ENCODE measurements at regions of chr2 and their contacts with region 1.

Region 1: DNA sequence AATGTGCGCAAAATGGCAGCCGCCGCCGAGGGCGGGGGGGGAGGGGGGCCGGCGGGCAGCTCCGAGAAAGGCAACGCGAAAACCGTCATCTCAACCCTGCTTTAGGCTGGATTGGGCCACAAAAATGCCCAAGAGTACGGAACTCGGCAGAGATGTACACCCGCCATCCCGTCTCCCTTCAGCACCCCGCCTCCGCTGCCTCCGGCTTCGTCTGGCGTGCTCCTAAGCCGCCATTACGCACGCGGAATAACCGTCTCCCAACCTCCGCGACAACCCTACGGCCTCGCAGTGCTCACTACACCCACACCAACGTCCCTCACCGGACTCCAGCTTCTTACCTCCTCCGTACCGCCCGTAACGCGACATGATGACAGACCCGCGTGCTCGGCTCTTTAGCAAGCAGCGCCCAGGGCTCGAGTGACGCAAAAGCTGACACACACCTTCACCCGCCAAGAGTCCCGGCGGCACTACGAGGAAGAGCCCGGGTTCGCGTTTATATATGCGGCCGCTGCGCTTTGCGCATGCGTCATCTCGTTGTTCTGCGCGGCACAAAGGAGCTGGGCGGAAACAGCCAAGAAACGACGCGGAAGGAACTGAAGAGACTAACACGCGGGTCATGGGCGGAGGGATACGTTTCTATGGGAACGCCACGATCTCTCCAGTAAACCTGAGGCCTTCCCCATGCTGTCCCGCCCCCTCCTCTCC is at the start of gene SRSF7:
- DNase-seq: peak; percentile 96 to 100 (median 98)
- ATAC-seq: peak; percentile 73
- H3K4me3 ChIP-seq: peak within 1 kb of the TSS; percentile 92 to 99
- H3K4me3 Mint-ChIP-seq: peak within 1 kb of the TSS; percentile 96
- H3K27ac ChIP-seq: peak within 1 kb of the TSS; percentile 96 to 99
- H3K27ac Mint-ChIP-seq: peak within 1 kb of the TSS; percentile 98
- H3K4me1 ChIP-seq: peaks cover 55% of the 10 kb centered on the region
- H3K4me1 Mint-ChIP-seq: peaks cover 53% of the 10 kb centered on the region
- H3K27me3 ChIP-seq: no peaks in the 10 kb centered on the region
- H3K27me3 Mint-ChIP-seq: no peaks in the 10 kb centered on the region
- CTCF ChIP-seq: no peak
- total RNA-seq, gene SRSF7: 607 to 608 TPM

Region 2: GRCh38 chr2:36966370-36967235 is 1784.4 kb before region 1 on chr2 and contains the start of gene STRN:
- CTCF ChIA-PET with region 1: no interaction called
- POLR2A ChIA-PET with region 1: interaction called, 3 read pairs
- intact Hi-C with region 1: loop called in 1 of 2 experiments (anchors 2 kb)
- DNase-seq: peak; percentile 94 to 99 (median 98)
- ATAC-seq: peak; percentile 91
- H3K4me3 ChIP-seq: peak within 1 kb of the TSS; percentile 69 to 96
- H3K4me3 Mint-ChIP-seq: peak within 1 kb of the TSS; percentile 98
- H3K27ac ChIP-seq: peak within 1 kb of the TSS; percentile 76 to 97
- H3K27ac Mint-ChIP-seq: peak within 1 kb of the TSS; percentile 99
- H3K4me1 ChIP-seq: peaks cover 19% of the 10 kb centered on the region
- H3K4me1 Mint-ChIP-seq: peaks cover 50% of the 10 kb centered on the region
- H3K27me3 ChIP-seq: no peaks in the 10 kb centered on the region
- H3K27me3 Mint-ChIP-seq: no peaks in the 10 kb centered on the region
- CTCF ChIP-seq: no peak
- total RNA-seq, gene STRN: 15.6 to 17.4 TPM

Region 3: DNA sequence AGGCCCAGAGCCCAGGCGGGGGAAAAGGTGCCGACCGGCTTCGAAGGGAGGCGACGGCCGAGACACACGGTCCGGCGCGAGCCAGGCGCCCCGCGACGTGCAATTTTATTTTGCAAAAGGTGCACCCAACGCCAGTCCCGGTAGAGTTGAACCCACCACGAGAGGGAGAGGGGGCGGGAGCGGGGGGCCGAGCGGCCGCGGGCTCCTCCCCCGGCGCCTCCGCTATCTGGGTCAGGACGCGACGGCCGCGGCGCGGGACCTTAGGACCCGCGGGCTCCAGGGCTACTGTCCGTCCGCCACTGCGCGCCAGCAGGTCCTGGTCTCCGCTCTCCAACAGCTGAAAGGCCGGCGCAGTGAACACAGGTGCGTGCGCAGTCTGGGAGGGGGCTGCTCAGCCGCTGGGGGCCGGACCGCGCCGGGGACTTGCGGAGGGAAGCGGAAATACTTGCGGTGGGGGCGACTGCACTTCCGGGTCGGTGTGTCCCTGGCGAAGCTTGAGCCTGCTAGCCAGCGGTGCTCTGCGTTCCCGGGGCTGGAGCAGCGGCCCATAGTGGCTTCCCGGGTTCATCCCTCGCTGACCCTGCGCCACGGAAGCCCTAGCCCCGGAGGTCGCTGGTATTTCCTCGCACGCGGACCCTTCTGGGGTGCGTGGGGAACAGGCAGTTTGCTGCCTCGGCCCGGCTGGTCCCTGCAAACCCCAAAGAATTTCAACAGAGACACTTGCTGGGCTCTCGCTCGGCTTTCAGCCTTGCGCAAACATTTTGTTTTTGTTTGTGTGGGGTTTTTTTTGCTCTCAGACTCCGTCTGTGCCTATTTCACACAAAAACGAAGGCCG is 825.8 kb before region 1 on chr2 and contains the start of gene RMDN2:
- CTCF ChIA-PET with region 1: no interaction called
- POLR2A ChIA-PET with region 1: interaction called, 7 read pairs
- intact Hi-C with region 1: loop called in 1 of 2 experiments (anchors 10 kb)
- DNase-seq: peak; percentile 37 to 92 (median 77)
- ATAC-seq: peak; percentile 80
- H3K4me3 ChIP-seq: peak within 1 kb of the TSS; percentile 68 to 82
- H3K4me3 Mint-ChIP-seq: peak within 1 kb of the TSS; percentile 92
- H3K27ac ChIP-seq: peak within 1 kb of the TSS; percentile 68 to 79
- H3K27ac Mint-ChIP-seq: peak within 1 kb of the TSS; percentile 92
- H3K4me1 ChIP-seq: peaks cover 11% of the 10 kb centered on the region
- H3K4me1 Mint-ChIP-seq: peaks cover 32% of the 10 kb centered on the region
- H3K27me3 ChIP-seq: peaks cover 0 to 2% of the 10 kb centered on the region in 2 experiments
- H3K27me3 Mint-ChIP-seq: no peaks in the 10 kb centered on the region
- CTCF ChIP-seq: no peak
- total RNA-seq, gene RMDN2: 3.4 to 3.9 TPM

Region 4: DNA sequence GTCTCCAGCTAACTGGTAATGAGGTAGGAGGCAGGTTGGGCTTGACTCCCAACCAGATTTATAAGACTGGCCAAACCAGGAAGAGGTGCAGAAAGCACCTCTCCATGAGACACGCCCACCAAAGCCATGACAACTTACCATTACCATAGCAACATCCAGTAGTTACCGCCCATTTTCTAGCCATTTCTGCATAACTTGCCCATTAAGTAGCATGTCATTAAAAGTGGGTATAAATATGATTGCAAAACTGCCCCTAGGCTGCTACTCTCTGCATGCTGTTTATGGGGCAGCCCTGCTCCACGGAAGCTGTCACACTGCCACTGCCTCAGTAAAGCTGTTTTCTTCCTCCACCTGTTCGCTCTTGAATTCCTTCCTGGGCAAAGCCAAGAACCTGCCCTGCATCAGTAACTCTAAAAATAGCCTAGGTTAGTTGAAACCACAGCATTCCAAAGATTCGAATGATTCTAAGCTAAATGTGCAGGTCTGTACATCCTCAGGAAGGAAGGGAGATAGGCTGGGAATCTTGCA is 505.9 kb before region 1 on chr2:
- CTCF ChIA-PET with region 1: no interaction called
- POLR2A ChIA-PET with region 1: no interaction called
- intact Hi-C with region 1: no loop called
- DNase-seq: no peak
- ATAC-seq: no peak
- H3K4me3 ChIP-seq: no peak overlapping the region
- H3K4me3 Mint-ChIP-seq: no peak overlapping the region
- H3K27ac ChIP-seq: no peak overlapping the region
- H3K27ac Mint-ChIP-seq: no peak overlapping the region
- H3K4me1 ChIP-seq: no peaks in the 10 kb centered on the region
- H3K4me1 Mint-ChIP-seq: no peaks in the 10 kb centered on the region
- H3K27me3 ChIP-seq: no peaks in the 10 kb centered on the region
- H3K27me3 Mint-ChIP-seq: peaks cover 2% of the 10 kb centered on the region
- CTCF ChIP-seq: no peak

Region 5: GRCh38 chr2:38432820-38433606 is 318.0 kb before region 1 on chr2:
- CTCF ChIA-PET with region 1: no interaction called
- POLR2A ChIA-PET with region 1: no interaction called
- intact Hi-C with region 1: no loop called
- DNase-seq: no peak
- ATAC-seq: no peak
- H3K4me3 ChIP-seq: no peak overlapping the region
- H3K4me3 Mint-ChIP-seq: no peak overlapping the region
- H3K27ac ChIP-seq: no peak overlapping the region
- H3K27ac Mint-ChIP-seq: no peak overlapping the region
- H3K4me1 ChIP-seq: no peaks in the 10 kb centered on the region
- H3K4me1 Mint-ChIP-seq: no peaks in the 10 kb centered on the region
- H3K27me3 ChIP-seq: no peaks in the 10 kb centered on the region
- H3K27me3 Mint-ChIP-seq: peaks cover 2% of the 10 kb centered on the region
- CTCF ChIP-seq: no peak

Region 6: DNA sequence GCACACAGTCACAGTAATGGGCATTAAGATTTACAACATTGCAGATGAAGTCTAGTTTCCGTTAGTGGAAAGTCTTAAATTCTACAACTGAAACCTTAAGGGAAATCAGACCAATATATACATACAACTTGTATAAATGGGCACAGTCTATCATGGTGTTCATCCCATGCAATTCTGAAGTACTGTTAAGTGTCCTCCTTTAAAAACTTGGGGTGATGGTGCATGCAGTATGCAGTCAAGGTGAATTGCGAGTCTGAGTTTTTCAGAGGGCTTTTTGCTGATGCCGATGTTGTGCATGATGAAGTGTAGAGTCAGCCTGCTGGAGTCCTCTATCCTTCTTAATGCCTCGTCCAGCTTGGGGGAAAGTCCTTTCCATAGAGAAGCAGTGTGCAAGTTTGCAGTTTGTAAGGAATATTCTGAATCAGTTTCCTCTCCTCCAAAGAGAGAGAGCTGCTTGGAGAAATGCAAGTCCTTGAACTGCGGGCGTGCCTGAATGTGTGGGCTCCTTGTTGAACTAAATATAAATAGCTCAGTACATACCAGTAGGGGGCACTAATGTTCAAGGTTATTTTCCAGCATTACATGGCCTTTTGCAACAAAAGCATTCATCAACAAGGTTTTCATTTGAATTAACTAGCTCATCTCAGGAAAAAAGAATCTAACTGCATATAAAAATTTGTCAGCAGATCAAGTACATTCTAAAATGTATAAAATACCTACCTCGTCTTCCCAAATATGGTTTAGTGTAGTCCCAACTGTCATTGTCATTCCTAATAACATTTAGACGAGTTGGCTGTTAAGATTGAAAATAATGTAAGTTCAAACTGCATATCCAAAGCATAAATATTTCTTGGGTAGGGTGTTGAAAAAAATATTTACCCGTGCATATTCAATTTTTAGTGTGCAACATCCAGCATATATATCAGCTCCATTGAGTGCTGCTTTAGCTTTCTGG is 169.6 kb before region 1 on chr2:
- CTCF ChIA-PET with region 1: interaction called, 12 read pairs
- POLR2A ChIA-PET with region 1: interaction called, 23 read pairs
- intact Hi-C with region 1: no loop called
- DNase-seq: peak in 6 of 9 experiments; percentile 33 to 85 (median 63)
- ATAC-seq: peak; percentile 93
- H3K4me3 ChIP-seq: no peak overlapping the region
- H3K4me3 Mint-ChIP-seq: no peak overlapping the region
- H3K27ac ChIP-seq: no peak overlapping the region
- H3K27ac Mint-ChIP-seq: no peak overlapping the region
- H3K4me1 ChIP-seq: no peaks in the 10 kb centered on the region
- H3K4me1 Mint-ChIP-seq: peaks cover 6% of the 10 kb centered on the region
- H3K27me3 ChIP-seq: no peaks in the 10 kb centered on the region
- H3K27me3 Mint-ChIP-seq: no peaks in the 10 kb centered on the region
- CTCF ChIP-seq: peak; percentile 68

Region 7: DNA sequence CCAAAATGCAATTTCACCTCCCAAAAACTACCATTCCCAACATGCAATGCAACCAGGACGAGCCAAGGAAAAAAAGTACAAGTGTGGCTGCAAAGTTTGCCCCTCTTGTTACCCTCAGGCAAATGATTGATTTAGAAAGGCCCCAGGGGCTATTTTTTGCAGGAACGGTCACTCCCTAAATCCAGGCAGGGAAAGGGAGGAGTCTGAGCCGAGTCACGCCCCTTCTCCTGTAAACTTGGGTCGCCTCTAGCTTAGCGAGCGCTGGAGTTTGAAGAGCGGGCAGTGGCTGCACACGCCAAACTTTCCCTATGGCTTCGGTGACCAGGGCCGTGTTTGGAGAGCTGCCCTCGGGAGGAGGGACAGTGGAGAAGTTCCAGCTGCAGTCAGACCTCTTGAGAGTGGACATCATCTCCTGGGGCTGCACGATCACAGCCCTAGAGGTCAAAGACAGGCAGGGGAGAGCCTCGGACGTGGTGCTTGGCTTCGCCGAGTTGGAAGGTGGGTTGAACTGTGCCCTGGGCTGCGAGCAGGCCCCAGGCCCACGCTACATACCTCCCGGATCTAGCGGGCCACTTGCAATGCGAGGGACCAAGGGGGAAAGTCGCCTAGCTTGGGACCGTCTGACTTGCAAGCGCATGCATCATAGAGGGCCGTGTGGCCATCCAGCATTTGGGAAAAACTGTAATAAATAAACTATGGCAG is 85.0 kb before region 1 on chr2 and contains the start of gene GALM:
- CTCF ChIA-PET with region 1: no interaction called
- POLR2A ChIA-PET with region 1: interaction called, 24 read pairs
- intact Hi-C with region 1: loop called in 1 of 2 experiments (anchors 2 kb)
- DNase-seq: peak in 7 of 9 experiments; percentile 18 to 79 (median 47)
- ATAC-seq: peak; percentile 33
- H3K4me3 ChIP-seq: peak within 1 kb of the TSS; percentile 88 to 92
- H3K4me3 Mint-ChIP-seq: peak within 1 kb of the TSS; percentile 88
- H3K27ac ChIP-seq: peak within 1 kb of the TSS; percentile 22 to 72
- H3K27ac Mint-ChIP-seq: peak within 1 kb of the TSS; percentile 90
- H3K4me1 ChIP-seq: peaks cover 16% of the 10 kb centered on the region
- H3K4me1 Mint-ChIP-seq: peaks cover 56% of the 10 kb centered on the region
- H3K27me3 ChIP-seq: no peaks in the 10 kb centered on the region
- H3K27me3 Mint-ChIP-seq: no peaks in the 10 kb centered on the region
- CTCF ChIP-seq: no peak
- total RNA-seq, gene GALM: 4.4 to 4.7 TPM

Region 8: DNA sequence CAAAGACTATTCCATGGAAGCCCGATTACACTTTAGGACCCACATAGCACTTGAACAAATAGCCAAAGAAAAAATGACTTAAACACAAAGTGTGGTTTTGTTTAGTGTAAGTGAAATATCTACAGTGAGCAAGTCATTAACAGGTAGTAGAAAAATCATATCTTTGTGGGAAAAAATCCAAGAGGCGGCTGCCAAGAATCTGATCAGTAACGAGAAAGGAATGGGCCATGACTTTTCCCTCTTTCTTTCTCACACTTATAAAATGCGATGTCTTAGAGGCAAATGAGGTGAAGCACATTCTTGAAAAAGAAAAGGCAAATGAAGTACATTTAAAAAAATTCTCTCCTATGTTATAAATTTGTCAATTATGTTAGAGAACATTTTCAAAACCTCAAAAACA is 14.1 kb after region 1 on chr2:
- CTCF ChIA-PET with region 1: interaction called, 3 read pairs
- POLR2A ChIA-PET with region 1: interaction called, 10 read pairs
- intact Hi-C with region 1: no loop called
- DNase-seq: no peak
- ATAC-seq: no peak
- H3K4me3 ChIP-seq: no peak overlapping the region
- H3K4me3 Mint-ChIP-seq: no peak overlapping the region
- H3K27ac ChIP-seq: no peak overlapping the region
- H3K27ac Mint-ChIP-seq: no peak overlapping the region
- H3K4me1 ChIP-seq: no peaks in the 10 kb centered on the region
- H3K4me1 Mint-ChIP-seq: no peaks in the 10 kb centered on the region
- H3K27me3 ChIP-seq: no peaks in the 10 kb centered on the region
- H3K27me3 Mint-ChIP-seq: no peaks in the 10 kb centered on the region
- CTCF ChIP-seq: no peak

Region 9: GRCh38 chr2:38875576-38876367 is 124.7 kb after region 1 on chr2 and contains the starts of genes DHX57 and MORN2:
- CTCF ChIA-PET with region 1: no interaction called
- POLR2A ChIA-PET with region 1: interaction called, 14 read pairs
- intact Hi-C with region 1: no loop called
- DNase-seq: peak; percentile 61 to 86 (median 81)
- ATAC-seq: peak; percentile 91
- H3K4me3 ChIP-seq: peak within 1 kb of the TSS; percentile 77 to 97
- H3K4me3 Mint-ChIP-seq: peak within 1 kb of the TSS; percentile 92
- H3K27ac ChIP-seq: peak within 1 kb of the TSS; percentile 56 to 89
- H3K27ac Mint-ChIP-seq: peak within 1 kb of the TSS; percentile 92
- H3K4me1 ChIP-seq: peaks cover 13% of the 10 kb centered on the region
- H3K4me1 Mint-ChIP-seq: peaks cover 42% of the 10 kb centered on the region
- H3K27me3 ChIP-seq: no peaks in the 10 kb centered on the region
- H3K27me3 Mint-ChIP-seq: no peaks in the 10 kb centered on the region
- CTCF ChIP-seq: no peak
- total RNA-seq, gene DHX57: 19.7 to 20.1 TPM
- total RNA-seq, gene MORN2: 5.7 to 6.8 TPM

Region 10: DNA sequence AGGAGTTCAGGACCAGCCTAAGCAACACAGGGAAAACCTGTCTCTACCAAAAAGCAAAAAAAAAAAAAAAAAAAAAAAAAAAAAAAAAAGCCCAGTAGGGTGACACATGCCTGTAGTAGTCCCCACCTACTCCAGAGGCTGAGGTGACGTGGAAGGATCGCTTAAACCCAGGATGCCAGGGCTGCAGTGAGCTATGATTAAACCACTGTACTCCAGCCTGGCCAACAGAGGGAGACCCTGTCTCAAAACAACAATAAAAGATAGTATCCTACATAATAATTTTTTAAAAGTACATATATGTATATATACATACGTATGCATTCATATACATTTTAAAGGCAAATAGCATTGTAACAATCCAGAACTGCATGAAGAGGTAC is 318.1 kb after region 1 on chr2:
- CTCF ChIA-PET with region 1: no interaction called
- POLR2A ChIA-PET with region 1: no interaction called
- intact Hi-C with region 1: no loop called
- DNase-seq: peak in 2 of 9 experiments; percentile 10 to 26
- ATAC-seq: peak; percentile 31
- H3K4me3 ChIP-seq: no peak overlapping the region
- H3K4me3 Mint-ChIP-seq: no peak overlapping the region
- H3K27ac ChIP-seq: no peak overlapping the region
- H3K27ac Mint-ChIP-seq: peak overlapping the region; percentile 32
- H3K4me1 ChIP-seq: no peaks in the 10 kb centered on the region
- H3K4me1 Mint-ChIP-seq: peaks cover 31% of the 10 kb centered on the region
- H3K27me3 ChIP-seq: no peaks in the 10 kb centered on the region
- H3K27me3 Mint-ChIP-seq: no peaks in the 10 kb centered on the region
- CTCF ChIP-seq: peak; percentile 24

Measured in CD8-positive, alpha-beta T cell (primary cell).